H1 (cell line): ENCODE measurements at regions of chr3 and their contacts with region 1.

Region 1: GRCh38 chr3:183265834-183266417 is 12.9 kb downstream of the B3GNT5 start:
- DNase-seq: no peak
- H3K4me3 ChIP-seq: peak overlapping the region in 1 of 4 experiments; percentile 48; a peak in 2 of 8 replicates
- H3K27ac ChIP-seq: peak overlapping the region; percentile 74; the same call in 1 of the 2 replicates
- H3K4me1 ChIP-seq: peaks cover 18 to 44% (median 24%) of the 10 kb centered on the region in 4 experiments
- H3K27me3 ChIP-seq: no peaks in the 10 kb centered on the region
- CTCF ChIP-seq: no peak
- EP300 ChIP-seq: no peak
- POLR2A ChIP-seq: no peak
- RAD21 ChIP-seq: no peak

Region 2: GRCh38 chr3:183252973-183253901 is 12.7 kb before region 1 on chr3 and contains the start of gene B3GNT5:
- CTCF ChIA-PET with region 1: interaction called, 5 read pairs
- POLR2A ChIA-PET with region 1: interaction called, 25 read pairs
- DNase-seq: peak in 1 of 2 experiments; percentile 71
- H3K4me3 ChIP-seq: peak within 1 kb of the TSS; percentile 75 to 84 (median 80)
- H3K27ac ChIP-seq: no peak within 1 kb of the TSS
- H3K4me1 ChIP-seq: peaks cover 0 to 19% (median 10%) of the 10 kb centered on the region in 4 experiments; a peak in 6 of 7 replicates
- H3K27me3 ChIP-seq: peaks cover 3 to 25% (median 17%) of the 10 kb centered on the region in 4 experiments
- CTCF ChIP-seq: no peak
- EP300 ChIP-seq: no peak
- POLR2A ChIP-seq: peak in 1 of 2 experiments; percentile 33; a peak in 1 of 3 replicates
- RAD21 ChIP-seq: no peak
- total RNA-seq, gene B3GNT5: 8.0 and 9.7 TPM in 2 replicates